ENCODE measurements at regions of chr2 and their contacts with region 1.

Region 1: DNA sequence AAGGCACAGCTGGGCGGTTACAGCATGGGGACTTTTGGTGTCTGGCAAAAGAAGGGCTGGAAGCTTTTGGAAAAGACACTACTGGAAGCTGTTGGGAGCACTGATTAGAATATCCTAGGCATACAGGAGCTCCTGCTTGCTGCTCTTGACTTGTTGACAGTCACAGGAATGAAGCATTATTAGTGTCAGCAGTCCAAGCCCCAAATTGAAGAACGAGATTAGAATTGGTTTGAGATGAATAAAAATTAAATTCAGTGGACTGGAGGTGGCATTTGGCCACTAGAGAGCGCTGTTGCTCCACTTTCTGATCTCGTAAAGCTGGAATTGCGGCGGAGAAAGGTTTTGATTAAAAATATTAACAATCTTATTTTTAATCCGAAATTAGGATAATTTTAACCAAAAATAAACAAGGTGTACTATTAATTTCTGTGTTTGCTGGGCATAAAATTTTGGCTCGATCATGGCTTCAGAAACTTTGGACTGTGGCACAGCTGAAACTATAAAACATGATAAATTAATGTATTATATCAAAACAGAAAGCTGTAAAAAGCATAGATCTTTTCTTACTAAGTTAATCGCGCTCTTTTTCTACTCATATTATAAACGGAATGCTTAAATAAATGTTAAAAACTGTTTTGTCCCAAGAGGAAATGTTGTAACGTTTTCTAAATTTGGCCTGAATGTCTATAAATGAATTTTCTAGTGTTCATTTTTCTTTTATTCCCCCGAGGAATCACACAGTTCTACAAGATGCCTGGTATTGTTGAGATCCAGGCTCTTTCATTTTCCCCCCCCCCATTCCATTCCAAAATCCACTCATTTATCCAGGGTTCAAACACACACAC is 2.4 kb upstream of the HOXD8 start:
- DNase-seq: peak; percentile 68 to 73
- H3K4me3 ChIP-seq: no peak overlapping the region
- H3K27ac ChIP-seq: no peak overlapping the region
- H3K4me1 ChIP-seq: peaks cover 5 to 28% of the 10 kb centered on the region in 2 donors
- H3K27me3 ChIP-seq: peaks cover 70% of the 10 kb centered on the region
- CTCF ChIP-seq: peak; percentile 72 to 88 (median 80)
- POLR2A ChIP-seq: no peak

Region 2: GRCh38 chr2:176554101-176555048 is 427.2 kb after region 1 on chr2:
- intact Hi-C with region 1: loop called (anchors 5 kb)
- DNase-seq: peak; percentile 8 to 22
- H3K4me3 ChIP-seq: peak overlapping the region in 2 of 3 donors; percentile 2 to 23
- H3K27ac ChIP-seq: peak overlapping the region in 2 of 3 donors; percentile 26 to 57
- H3K4me1 ChIP-seq: peaks cover 0 to 5% of the 10 kb centered on the region in 2 donors
- H3K27me3 ChIP-seq: no peaks in the 10 kb centered on the region
- CTCF ChIP-seq: peak; percentile 56 to 90 (median 75)
- POLR2A ChIP-seq: no peak

Region 3: GRCh38 chr2:176638167-176639015 is 511.2 kb after region 1 on chr2:
- intact Hi-C with region 1: loop called (anchors 5 kb)
- DNase-seq: peak; percentile 58 to 63
- H3K4me3 ChIP-seq: peak overlapping the region in 1 of 3 donors; percentile 36
- H3K27ac ChIP-seq: no peak overlapping the region
- H3K4me1 ChIP-seq: peaks cover 6% of the 10 kb centered on the region in 2 donors
- H3K27me3 ChIP-seq: peaks cover 10% of the 10 kb centered on the region
- CTCF ChIP-seq: peak in 5 of 6 experiments; percentile 35 to 77 (median 67)
- POLR2A ChIP-seq: no peak

Region 4: GRCh38 chr2:177148477-177149154 is 1021.5 kb after region 1 on chr2:
- intact Hi-C with region 1: loop called (anchors 10 kb)
- DNase-seq: peak; percentile 67 to 75
- H3K4me3 ChIP-seq: peak overlapping the region in 1 of 3 donors; percentile 11
- H3K27ac ChIP-seq: no peak overlapping the region
- H3K4me1 ChIP-seq: peaks cover 0 to 5% of the 10 kb centered on the region in 2 donors
- H3K27me3 ChIP-seq: no peaks in the 10 kb centered on the region
- CTCF ChIP-seq: peak; percentile 50 to 83 (median 70)
- POLR2A ChIP-seq: peak in 1 of 2 donors; percentile 5

Measured in thyroid gland (tissue), 4 donors.